ENCODE measurements at regions of chr12 and their contacts with region 1.

Region 1: GRCh38 chr12:94753036-94753679 is 102.8 kb upstream of the TMCC3 start:
- DNase-seq: no peak
- ATAC-seq: peak in 1 of 2 donors; percentile 45
- H3K4me3 ChIP-seq: no peak overlapping the region
- H3K27ac ChIP-seq: no peak overlapping the region
- H3K4me1 ChIP-seq: no peaks in the 10 kb centered on the region
- H3K27me3 ChIP-seq: no peaks in the 10 kb centered on the region
- CTCF ChIP-seq: no peak
- POLR2A ChIP-seq: no peak

Region 2: GRCh38 chr12:94545935-94546771 is 207.0 kb before region 1 on chr12:
- in situ Hi-C with region 1: loop called in 2 of 4 experiments (anchors 10 kb)
- intact Hi-C with region 1: no loop called
- DNase-seq: peak; percentile 23 to 35
- ATAC-seq: peak; percentile 86 to 96
- H3K4me3 ChIP-seq: no peak overlapping the region
- H3K27ac ChIP-seq: no peak overlapping the region
- H3K4me1 ChIP-seq: no peaks in the 10 kb centered on the region
- H3K27me3 ChIP-seq: no peaks in the 10 kb centered on the region
- CTCF ChIP-seq: peak; percentile 65 to 81 (median 76)
- POLR2A ChIP-seq: no peak

Region 3: DNA sequence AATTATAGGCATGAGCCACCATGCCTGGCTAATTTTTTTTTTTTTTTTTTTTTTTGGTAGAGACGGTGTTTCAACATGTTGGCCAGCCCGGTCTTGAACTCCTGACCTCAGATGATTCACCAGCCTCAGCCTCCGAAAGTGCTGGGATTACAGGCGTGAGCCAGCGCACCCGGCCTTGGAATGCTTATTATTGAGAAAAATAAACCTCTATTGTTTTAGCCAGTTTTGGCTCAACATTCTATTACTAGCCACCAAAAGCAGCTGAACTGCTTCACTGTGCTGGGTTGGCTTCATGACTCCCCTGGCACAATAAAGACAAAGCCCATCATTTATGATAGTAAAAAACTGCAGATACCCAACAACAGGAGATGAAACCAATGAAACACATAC is 200.0 kb before region 1 on chr12:
- in situ Hi-C with region 1: loop called in 2 of 4 experiments (anchors 10 kb)
- intact Hi-C with region 1: no loop called
- DNase-seq: no peak
- ATAC-seq: no peak
- H3K4me3 ChIP-seq: no peak overlapping the region
- H3K27ac ChIP-seq: no peak overlapping the region
- H3K4me1 ChIP-seq: peaks cover 0 to 6% of the 10 kb centered on the region in 2 donors
- H3K27me3 ChIP-seq: no peaks in the 10 kb centered on the region
- CTCF ChIP-seq: no peak
- POLR2A ChIP-seq: no peak

Region 4: DNA sequence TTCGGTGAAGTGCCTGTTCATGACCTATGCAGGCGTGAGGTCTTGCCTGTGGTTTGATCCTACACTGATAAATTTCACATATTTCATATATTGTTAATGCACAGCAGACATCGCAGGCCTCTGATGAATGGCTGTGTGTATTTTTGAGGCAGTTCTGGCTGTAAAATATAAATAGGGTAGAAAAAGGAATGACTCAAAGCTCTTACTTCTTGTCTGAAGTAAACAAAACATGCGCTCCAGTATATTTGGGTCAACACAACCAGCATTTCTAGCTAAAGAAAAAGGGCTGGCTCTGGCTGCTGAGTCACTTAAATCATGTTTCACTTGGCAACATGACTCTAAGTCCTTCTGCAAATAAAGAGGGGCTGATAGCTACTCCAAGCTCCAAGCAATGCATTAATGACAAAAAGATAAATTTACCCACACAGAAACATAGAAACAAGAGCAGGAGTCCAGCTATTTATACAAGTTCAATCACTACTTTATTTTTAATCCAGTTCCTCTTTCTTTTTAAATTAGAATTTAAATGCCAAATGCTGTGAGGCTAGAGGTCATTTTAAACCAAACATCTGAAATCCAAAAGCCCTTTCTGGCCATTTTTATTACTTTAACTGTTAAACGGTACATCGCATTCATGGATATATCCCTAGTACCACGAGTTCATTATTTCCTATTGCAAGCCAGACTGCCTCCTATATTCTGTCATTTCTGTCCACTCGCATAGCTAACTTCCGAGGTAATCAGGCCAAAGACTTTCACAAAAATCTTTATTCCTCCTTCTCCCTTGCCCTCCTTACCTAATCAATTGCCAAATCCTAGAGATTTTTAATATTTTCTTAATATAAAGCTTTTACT is 48.5 kb before region 1 on chr12:
- in situ Hi-C with region 1: no loop called
- intact Hi-C with region 1: loop called (anchors 5 kb)
- DNase-seq: peak in 1 of 2 donors; percentile 20
- ATAC-seq: peak in 1 of 2 donors; percentile 86
- H3K4me3 ChIP-seq: no peak overlapping the region
- H3K27ac ChIP-seq: peak overlapping the region in 3 of 4 donors; percentile 33 to 52 (median 40)
- H3K4me1 ChIP-seq: peaks cover 4 to 21% of the 10 kb centered on the region in 2 donors
- H3K27me3 ChIP-seq: no peaks in the 10 kb centered on the region
- CTCF ChIP-seq: no peak
- POLR2A ChIP-seq: no peak

Measured in gastrocnemius medialis (tissue), 4 donors.